ENCODE measurements at regions of chr3 and their contacts with region 1.

Region 1: DNA sequence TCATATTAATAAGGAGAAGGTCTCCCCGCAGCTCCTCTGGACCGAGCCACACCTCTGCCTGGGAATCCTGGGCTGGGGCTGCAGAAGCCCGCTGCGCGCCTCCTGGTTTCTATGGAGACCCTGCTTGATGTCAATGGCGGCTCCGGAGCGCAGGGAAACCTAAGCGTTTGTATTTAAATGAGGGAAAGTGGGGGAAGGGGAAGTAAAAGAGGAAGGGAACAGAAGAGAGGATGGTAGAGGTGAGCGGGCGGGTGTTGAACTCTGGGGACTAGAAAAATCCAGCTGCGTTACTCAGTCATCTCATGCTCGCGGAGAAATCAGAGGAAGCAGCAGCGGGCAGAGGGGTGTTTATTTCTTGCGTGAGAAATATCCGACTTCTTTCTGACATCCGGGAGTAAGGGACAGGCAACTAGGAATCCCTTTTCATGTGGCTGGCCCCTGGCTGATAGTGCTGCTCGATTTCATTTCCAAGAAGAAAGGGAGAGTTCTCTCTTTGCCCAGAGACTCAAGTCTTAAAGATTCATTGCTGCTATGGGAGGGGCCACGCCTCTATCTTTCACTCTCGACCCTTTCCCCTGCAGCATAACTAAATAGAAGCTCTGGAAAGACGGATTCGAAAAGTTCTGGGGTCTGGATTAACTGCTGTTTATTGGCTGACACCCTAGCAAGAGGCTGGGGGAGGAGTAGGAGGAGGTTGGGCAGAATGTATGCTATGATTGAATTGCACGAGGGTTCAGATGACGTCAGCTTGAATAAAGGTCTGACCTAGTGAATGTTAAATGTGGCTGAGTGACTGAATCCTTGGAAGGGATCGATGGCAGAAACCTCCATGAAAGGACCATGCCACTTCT is 110.5 kb upstream of the GAP43 start:
- DNase-seq: no peak
- ATAC-seq: peak; percentile 47
- H3K4me3 Mint-ChIP-seq: peak overlapping the region; percentile 88
- H3K27ac Mint-ChIP-seq: peak overlapping the region; percentile 16
- H3K4me1 Mint-ChIP-seq: peaks cover 27% of the 10 kb centered on the region
- H3K27me3 Mint-ChIP-seq: peaks cover 10% of the 10 kb centered on the region
- CTCF ChIP-seq: no peak

Region 2: GRCh38 chr3:115658337-115659181 is 145.8 kb after region 1 on chr3:
- CTCF ChIA-PET with region 1: no interaction called
- POLR2A ChIA-PET with region 1: no interaction called
- intact Hi-C with region 1: loop called (anchors 2 kb)
- DNase-seq: peak; percentile 80
- ATAC-seq: peak; percentile 94
- H3K4me3 Mint-ChIP-seq: peak overlapping the region; percentile 94
- H3K27ac Mint-ChIP-seq: peak overlapping the region; percentile 99
- H3K4me1 Mint-ChIP-seq: peaks cover 45% of the 10 kb centered on the region
- H3K27me3 Mint-ChIP-seq: no peaks in the 10 kb centered on the region
- CTCF ChIP-seq: no peak

Measured in activated B cell treated with CpG ODN at 0.5 μM for 24 hours (primary cell).